Mammary epithelial cell (primary cell): ENCODE measurements at regions of chr7 and their contacts with region 1.

Region 1: GRCh38 chr7:123748734-123749536 is at the start of gene WASL:
- DNase-seq: peak; percentile 90
- H3K4me3 ChIP-seq: peak within 1 kb of the TSS; percentile 61 to 98 (median 76)
- H3K27ac ChIP-seq: peak within 1 kb of the TSS; percentile 94
- H3K4me1 ChIP-seq: peaks cover 7% of the 10 kb centered on the region
- H3K27me3 ChIP-seq: no peaks in the 10 kb centered on the region
- CTCF ChIP-seq: peak in 1 of 2 donors; percentile 6
- total RNA-seq, gene WASL: 26.3 to 45.6 TPM

Region 2: GRCh38 chr7:123692471-123692877 is 56.5 kb before region 1 on chr7:
- CTCF ChIA-PET with region 1: no interaction called
- dilution Hi-C with region 1: no loop called
- in situ Hi-C with region 1: no loop called
- intact Hi-C with region 1: loop called (anchors 10 kb)
- DNase-seq: no peak
- H3K4me3 ChIP-seq: no peak overlapping the region
- H3K27ac ChIP-seq: no peak overlapping the region
- H3K4me1 ChIP-seq: no peaks in the 10 kb centered on the region
- H3K27me3 ChIP-seq: no peaks in the 10 kb centered on the region
- CTCF ChIP-seq: no peak

Region 3: DNA sequence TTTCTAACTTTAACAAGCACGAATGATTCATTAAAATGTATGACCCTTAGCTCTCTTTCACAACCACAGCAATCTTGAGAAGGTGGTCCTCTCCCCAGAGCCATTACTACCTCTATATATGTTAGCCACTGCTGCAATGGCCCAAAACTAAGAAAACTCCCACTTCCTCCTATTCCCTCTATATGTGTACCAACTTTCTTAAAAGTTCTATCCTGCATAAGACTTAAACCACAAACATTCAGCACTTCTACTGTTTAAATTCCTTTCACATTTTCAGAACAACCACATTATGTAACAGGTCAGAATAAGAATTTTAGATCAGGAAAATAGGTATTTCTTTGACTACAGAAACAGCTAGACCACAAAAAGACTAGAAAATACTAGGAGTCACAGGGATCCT is 36.3 kb before region 1 on chr7:
- CTCF ChIA-PET with region 1: no interaction called
- dilution Hi-C with region 1: no loop called
- in situ Hi-C with region 1: no loop called
- intact Hi-C with region 1: loop called (anchors 2 kb)
- DNase-seq: peak; percentile 31
- H3K4me3 ChIP-seq: no peak overlapping the region
- H3K27ac ChIP-seq: no peak overlapping the region
- H3K4me1 ChIP-seq: peaks cover 35% of the 10 kb centered on the region
- H3K27me3 ChIP-seq: no peaks in the 10 kb centered on the region
- CTCF ChIP-seq: no peak

Region 4: DNA sequence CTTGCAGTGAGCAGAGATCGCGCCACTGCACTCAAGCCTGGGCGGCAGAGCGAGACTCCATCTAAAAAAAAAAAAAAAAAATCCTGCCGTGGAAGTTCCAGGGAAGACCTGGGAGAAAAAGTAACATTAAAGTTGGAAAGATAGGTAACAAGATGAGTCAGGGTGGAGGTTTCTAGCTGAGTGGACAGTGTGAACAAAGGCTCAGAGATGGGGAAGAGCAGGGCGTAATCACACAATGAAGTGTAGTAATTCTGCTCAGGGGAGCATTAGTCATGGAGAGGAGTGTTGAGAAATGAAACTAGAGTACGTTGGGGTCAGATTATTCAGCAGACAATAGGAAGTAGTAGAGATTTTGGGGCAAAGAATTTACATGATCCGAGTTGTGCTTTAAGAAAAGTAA is 21.4 kb after region 1 on chr7:
- CTCF ChIA-PET with region 1: no interaction called
- dilution Hi-C with region 1: no loop called
- in situ Hi-C with region 1: no loop called
- intact Hi-C with region 1: loop called (anchors 1 kb)
- DNase-seq: peak; percentile 97
- H3K4me3 ChIP-seq: no peak overlapping the region
- H3K27ac ChIP-seq: peak overlapping the region; percentile 88
- H3K4me1 ChIP-seq: peaks cover 43% of the 10 kb centered on the region
- H3K27me3 ChIP-seq: no peaks in the 10 kb centered on the region
- CTCF ChIP-seq: no peak

Region 5: GRCh38 chr7:124542476-124542875 is 793.5 kb after region 1 on chr7:
- CTCF ChIA-PET with region 1: no interaction called
- dilution Hi-C with region 1: no loop called
- in situ Hi-C with region 1: no loop called
- intact Hi-C with region 1: no loop called
- DNase-seq: no peak
- H3K4me3 ChIP-seq: no peak overlapping the region
- H3K27ac ChIP-seq: no peak overlapping the region
- H3K4me1 ChIP-seq: no peaks in the 10 kb centered on the region
- H3K27me3 ChIP-seq: no peaks in the 10 kb centered on the region
- CTCF ChIP-seq: no peak